ENCODE measurements at regions of chr1 and their contacts with region 1.

Region 1: GRCh38 chr1:67766141-67766978 is 66.9 kb downstream of the GNG12 start:
- DNase-seq: no peak
- ATAC-seq: peak; percentile 76
- H3K4me3 ChIP-seq: peak overlapping the region; percentile 25 to 43
- H3K27ac ChIP-seq: 0 out of 2 replicates have a peak overlapping the region, but pooled peaks have one; percentile 48
- H3K4me1 ChIP-seq: peaks cover 13% of the 10 kb centered on the region
- H3K27me3 ChIP-seq: no peaks in the 10 kb centered on the region
- CTCF ChIP-seq: peak; percentile 89

Region 2: GRCh38 chr1:67679691-67680090 is 86.7 kb before region 1 on chr1:
- CTCF ChIA-PET with region 1: no interaction called
- POLR2A ChIA-PET with region 1: no interaction called
- in situ Hi-C with region 1: no loop called
- intact Hi-C with region 1: no loop called
- DNase-seq: no peak
- ATAC-seq: no peak
- H3K4me3 ChIP-seq: no peak overlapping the region
- H3K27ac ChIP-seq: peak overlapping the region; percentile 55; the same call in 1 of the 2 replicates
- H3K4me1 ChIP-seq: peaks cover 44% of the 10 kb centered on the region
- H3K27me3 ChIP-seq: no peaks in the 10 kb centered on the region
- CTCF ChIP-seq: no peak

Region 3: GRCh38 chr1:67801903-67802302 is 35.5 kb after region 1 on chr1:
- CTCF ChIA-PET with region 1: no interaction called
- POLR2A ChIA-PET with region 1: no interaction called
- in situ Hi-C with region 1: no loop called
- intact Hi-C with region 1: no loop called
- DNase-seq: no peak
- ATAC-seq: peak; percentile 56; the same call in 1 of the 2 replicates
- H3K4me3 ChIP-seq: no peak overlapping the region
- H3K27ac ChIP-seq: no peak overlapping the region
- H3K4me1 ChIP-seq: peaks cover 15% of the 10 kb centered on the region; the same call in 1 of the 2 replicates
- H3K27me3 ChIP-seq: no peaks in the 10 kb centered on the region
- CTCF ChIP-seq: no peak

Region 4: DNA sequence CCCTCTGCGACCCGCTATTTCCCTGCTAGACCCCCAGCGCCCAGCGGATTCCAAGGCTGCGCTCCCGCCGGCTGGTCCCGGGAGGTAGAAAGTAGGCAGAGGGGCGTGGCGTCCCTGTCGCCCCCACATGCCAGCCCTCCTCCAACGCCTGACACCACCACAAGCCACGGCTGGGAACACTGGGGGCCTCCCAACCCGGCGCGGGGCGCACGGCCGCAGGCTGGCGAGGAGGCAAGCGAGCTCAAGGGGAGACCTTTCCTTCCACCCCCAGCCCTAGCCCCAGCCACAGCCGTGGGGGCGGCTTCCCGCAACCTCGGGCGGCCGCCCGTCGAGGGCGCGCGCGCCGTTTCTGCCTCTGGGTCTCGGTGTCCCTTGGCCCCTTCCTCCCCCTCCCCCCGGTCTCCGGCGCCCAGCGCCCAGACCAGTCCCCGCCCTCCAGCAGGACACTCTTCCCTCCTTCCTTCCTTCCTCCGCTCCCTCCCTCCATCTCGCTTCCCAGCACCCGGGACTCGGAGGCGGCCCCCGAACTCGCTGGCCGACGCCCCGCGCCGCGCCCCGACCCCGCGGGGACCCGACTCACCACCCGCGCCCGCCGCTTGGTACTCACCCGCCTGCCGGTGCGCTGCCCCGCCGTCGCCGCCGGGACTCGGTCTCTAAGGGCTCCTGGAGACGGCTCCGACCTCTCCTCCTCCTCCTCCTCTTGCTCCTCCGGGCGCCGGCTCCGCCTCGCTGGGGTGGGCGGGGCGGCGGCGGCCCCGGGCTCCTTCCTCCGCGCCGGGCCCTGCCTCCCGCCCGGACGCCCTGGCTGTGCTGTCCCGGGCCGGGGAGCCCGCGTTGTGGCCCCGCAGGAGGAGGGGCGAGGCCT is 66.6 kb after region 1 on chr1 and contains the start of gene GNG12:
- CTCF ChIA-PET with region 1: interaction called, 6 read pairs
- POLR2A ChIA-PET with region 1: no interaction called
- in situ Hi-C with region 1: no loop called
- intact Hi-C with region 1: loop called (anchors 5 kb)
- DNase-seq: no peak
- ATAC-seq: peak; percentile 94
- H3K4me3 ChIP-seq: peak within 1 kb of the TSS; percentile 79 to 93
- H3K27ac ChIP-seq: peak within 1 kb of the TSS; percentile 92
- H3K4me1 ChIP-seq: peaks cover 18% of the 10 kb centered on the region
- H3K27me3 ChIP-seq: no peaks in the 10 kb centered on the region
- CTCF ChIP-seq: no peak
- total RNA-seq, gene GNG12: 70.0 TPM

Region 5: DNA sequence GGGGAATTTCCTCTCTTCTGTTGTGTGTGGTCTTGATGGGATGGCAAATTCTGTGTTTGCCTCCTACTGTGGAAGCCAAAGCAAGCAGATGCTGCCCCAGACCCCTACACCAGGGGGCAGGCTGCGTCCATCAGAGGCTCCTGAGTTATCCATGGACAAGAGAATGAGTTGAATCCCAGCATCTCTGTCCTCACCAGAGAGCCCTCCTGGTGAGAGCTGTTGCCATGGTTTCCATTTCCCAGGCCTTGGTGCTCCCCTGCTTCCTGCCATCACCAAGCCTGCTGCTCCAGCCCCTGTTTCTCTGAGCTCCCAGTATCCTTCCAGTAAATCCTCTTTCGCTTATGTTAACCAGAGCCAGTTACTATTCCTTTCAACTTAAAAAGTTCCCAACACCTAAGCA is 87.3 kb after region 1 on chr1:
- CTCF ChIA-PET with region 1: interaction called, 9 read pairs
- POLR2A ChIA-PET with region 1: no interaction called
- in situ Hi-C with region 1: no loop called
- intact Hi-C with region 1: loop called (anchors 5 kb)
- DNase-seq: no peak
- ATAC-seq: peak; percentile 80; the same call in 1 of the 2 replicates
- H3K4me3 ChIP-seq: no peak overlapping the region
- H3K27ac ChIP-seq: no peak overlapping the region
- H3K4me1 ChIP-seq: peaks cover 8% of the 10 kb centered on the region; the same call in 1 of the 2 replicates
- H3K27me3 ChIP-seq: 0 out of 2 replicates have a peak, but pooled peaks cover 2% of the 10 kb centered on the region
- CTCF ChIP-seq: peak; percentile 84

Region 6: DNA sequence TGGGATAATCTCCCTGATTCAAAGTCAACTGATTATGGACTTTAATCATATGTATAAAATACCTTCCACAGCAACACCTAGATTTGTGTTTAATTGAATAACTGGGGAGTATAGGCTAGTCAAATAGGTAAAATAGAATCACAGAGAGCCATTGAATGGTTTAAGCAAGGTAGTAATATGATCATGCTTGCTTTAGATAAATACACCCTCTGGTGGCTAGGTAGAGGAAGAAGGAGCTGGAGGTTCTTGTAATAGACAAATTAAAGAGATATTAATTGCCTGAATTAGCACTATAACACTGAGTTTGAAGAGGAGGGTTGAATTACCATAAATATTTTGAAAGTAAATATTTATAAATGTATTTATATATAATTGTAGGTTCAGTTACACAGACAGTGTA is 243.7 kb after region 1 on chr1:
- CTCF ChIA-PET with region 1: interaction called, 21 read pairs
- POLR2A ChIA-PET with region 1: no interaction called
- in situ Hi-C with region 1: no loop called
- intact Hi-C with region 1: no loop called
- DNase-seq: no peak
- ATAC-seq: no peak
- H3K4me3 ChIP-seq: no peak overlapping the region
- H3K27ac ChIP-seq: no peak overlapping the region
- H3K4me1 ChIP-seq: no peaks in the 10 kb centered on the region
- H3K27me3 ChIP-seq: no peaks in the 10 kb centered on the region
- CTCF ChIP-seq: peak; percentile 24; the same call in 1 of the 2 replicates

Region 7: GRCh38 chr1:68111519-68112436 is 345.4 kb after region 1 on chr1:
- CTCF ChIA-PET with region 1: interaction called, 6 read pairs
- POLR2A ChIA-PET with region 1: interaction called, 3 read pairs
- in situ Hi-C with region 1: no loop called
- intact Hi-C with region 1: loop called (anchors 5 kb)
- DNase-seq: no peak
- ATAC-seq: peak; percentile 93
- H3K4me3 ChIP-seq: no peak overlapping the region
- H3K27ac ChIP-seq: no peak overlapping the region
- H3K4me1 ChIP-seq: peaks cover 3% of the 10 kb centered on the region; the same call in 1 of the 2 replicates
- H3K27me3 ChIP-seq: no peaks in the 10 kb centered on the region
- CTCF ChIP-seq: peak; percentile 82